Sigmoid colon (tissue), 7 donors: ENCODE measurements at regions of chr19 and their contacts with region 1.

Region 1: DNA sequence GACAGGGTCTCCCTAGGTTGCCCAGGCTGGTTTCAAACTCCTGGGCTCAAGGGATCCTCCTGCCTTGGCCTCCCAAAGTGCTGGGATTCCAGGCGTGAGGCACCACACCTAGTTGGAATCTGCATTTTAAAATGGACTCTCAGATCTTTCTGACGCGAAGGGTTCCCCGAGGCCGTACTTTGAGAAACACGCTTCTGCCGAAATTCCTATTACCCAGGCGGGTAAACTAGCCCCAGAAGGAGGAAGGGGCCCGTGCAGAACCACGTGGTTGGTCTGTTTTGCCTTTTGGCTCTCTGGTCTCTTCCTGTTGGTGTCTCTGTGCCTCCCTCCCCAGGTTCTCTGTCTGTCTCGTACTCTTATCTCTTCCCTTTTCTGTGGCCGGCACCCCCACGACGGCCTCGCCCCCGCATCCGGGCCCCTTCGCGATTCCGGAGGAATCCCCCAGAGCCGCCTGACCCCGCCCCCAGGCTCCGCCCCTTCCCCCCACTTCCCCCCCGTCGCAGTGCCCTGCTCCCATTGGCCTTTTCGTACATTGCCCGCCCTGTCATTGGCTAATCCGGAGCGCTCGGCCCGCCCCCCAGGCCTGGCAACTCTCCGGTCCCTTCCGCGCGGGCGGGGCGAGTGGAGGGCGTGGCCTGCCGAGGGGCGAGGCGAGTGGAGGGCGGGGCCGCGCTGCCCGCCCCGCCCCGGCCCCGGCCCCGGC is at the start of gene TNFAIP8L1:
- DNase-seq: peak; percentile 98
- H3K4me3 ChIP-seq: peak within 1 kb of the TSS; percentile 91 to 99 (median 94)
- H3K27ac ChIP-seq: peak within 1 kb of the TSS; percentile 69 to 97 (median 95)
- H3K4me1 ChIP-seq: peaks cover 0 to 56% (median 43%) of the 10 kb centered on the region in 4 donors
- H3K27me3 ChIP-seq: no peaks in the 10 kb centered on the region
- CTCF ChIP-seq: no peak
- EP300 ChIP-seq: no peak
- POLR2A ChIP-seq: no peak
- total RNA-seq, gene TNFAIP8L1: 18.9 to 25.2 (median 20.0) TPM

Region 2: GRCh38 chr19:4400135-4400936 is 238.6 kb before region 1 on chr19 and contains the start of gene SH3GL1:
- intact Hi-C with region 1: loop called (anchors 5 kb)
- DNase-seq: peak; percentile 98
- H3K4me3 ChIP-seq: peak within 1 kb of the TSS; percentile 91 to 98 (median 96)
- H3K27ac ChIP-seq: peak within 1 kb of the TSS; percentile 94 to 97 (median 96)
- H3K4me1 ChIP-seq: peaks cover 0 to 58% (median 55%) of the 10 kb centered on the region in 4 donors
- H3K27me3 ChIP-seq: no peaks in the 10 kb centered on the region
- CTCF ChIP-seq: peak; percentile 77 to 97 (median 88)
- EP300 ChIP-seq: peak in 1 of 4 donors; percentile 17
- POLR2A ChIP-seq: no peak
- total RNA-seq, gene SH3GL1: 28.5 to 33.9 (median 32.2) TPM

Region 3: DNA sequence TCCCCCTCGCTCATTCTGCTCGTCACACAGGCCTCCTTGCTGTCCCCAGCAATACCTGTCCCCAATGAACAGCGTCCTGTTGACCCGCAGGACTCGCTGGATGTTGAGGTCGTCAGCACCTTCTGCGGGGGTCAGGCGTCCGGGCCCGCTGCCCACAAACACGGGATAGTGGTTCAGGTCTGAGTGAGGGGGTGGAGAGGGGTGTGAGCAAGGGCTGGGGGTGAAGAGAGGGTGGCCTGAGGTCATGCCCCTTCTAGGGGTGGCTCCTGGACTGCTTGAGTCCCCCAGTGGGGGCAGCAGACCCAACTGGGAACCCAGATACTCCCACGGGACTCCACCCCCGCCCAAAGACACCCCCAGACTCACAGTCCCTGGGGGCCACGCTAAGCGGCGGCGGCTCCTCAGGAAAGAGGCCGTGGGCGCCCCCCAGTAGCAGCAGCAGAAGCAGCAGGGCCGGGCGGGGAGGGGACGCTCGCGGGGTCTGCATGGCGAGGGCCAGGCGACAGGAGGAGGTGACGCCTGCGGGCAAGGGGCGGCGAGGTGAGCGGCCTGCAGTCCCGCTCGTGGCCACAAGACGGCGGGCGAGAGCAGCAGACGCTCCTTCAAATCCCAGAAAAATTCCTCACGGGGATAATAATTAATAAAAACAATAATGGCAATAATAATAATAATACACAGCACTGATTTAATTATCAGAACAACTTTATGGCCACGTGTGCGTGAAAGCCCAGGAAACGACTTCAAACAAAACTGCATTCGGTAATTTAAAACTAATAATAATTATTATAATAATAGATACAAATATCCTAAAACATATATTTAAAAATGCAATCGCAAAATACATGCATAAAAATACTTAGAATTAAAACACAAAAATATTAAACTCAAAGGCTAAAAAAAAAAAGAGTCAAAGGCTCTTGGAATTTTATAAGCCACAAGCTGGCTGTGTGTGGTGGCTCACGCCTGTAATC is 80.7 kb before region 1 on chr19:
- intact Hi-C with region 1: loop called (anchors 5 kb)
- DNase-seq: no peak
- H3K4me3 ChIP-seq: peak overlapping the region; percentile 2 to 35 (median 18)
- H3K27ac ChIP-seq: peak overlapping the region in 2 of 4 donors; percentile 45 to 57
- H3K4me1 ChIP-seq: peaks cover 0 to 7% (median 5%) of the 10 kb centered on the region in 4 donors
- H3K27me3 ChIP-seq: no peaks in the 10 kb centered on the region
- CTCF ChIP-seq: peak; percentile 91 to 99 (median 96)
- EP300 ChIP-seq: no peak
- POLR2A ChIP-seq: no peak

Region 4: DNA sequence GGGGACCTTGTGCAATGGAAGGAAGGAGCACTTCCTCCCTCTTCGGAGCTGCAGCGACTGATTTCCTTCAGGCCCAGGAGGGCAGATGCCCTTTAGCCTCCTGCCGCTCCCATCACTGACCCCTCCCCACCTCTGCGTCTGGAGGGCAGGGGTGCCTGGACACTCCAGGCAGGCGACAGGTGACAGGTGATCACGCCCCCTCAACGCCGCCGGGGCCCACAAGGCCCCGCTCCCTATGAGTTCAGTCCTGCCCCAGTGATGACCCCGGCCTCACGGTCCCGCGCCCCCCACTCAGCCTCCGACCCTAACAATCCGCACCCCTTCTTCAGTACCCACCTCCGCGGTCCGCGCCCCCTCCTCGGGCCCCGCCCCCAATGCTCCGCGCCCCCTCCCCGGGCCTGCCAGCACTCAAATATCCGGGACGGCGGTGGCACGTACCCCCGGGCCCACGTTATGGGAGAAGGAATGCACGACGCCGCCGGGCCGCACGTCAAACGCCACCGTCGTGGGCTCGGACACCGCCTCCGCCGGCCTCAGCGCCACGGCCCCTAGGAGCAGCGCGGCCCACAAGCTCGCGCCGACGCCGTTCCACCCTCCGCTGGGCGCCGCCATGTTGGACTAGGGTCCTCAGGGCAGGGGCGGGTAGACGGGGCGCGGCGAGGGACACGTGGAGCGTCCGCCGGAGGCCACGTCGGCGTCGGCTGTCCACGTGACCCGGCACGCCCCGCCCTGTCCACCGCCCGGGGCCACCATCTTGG is 30.9 kb after region 1 on chr19 and contains the start of gene MYDGF:
- intact Hi-C with region 1: loop called (anchors 1 kb)
- DNase-seq: peak; percentile 96
- H3K4me3 ChIP-seq: peak within 1 kb of the TSS; percentile 89 to 99 (median 95)
- H3K27ac ChIP-seq: peak within 1 kb of the TSS; percentile 80 to 83 (median 82)
- H3K4me1 ChIP-seq: peaks cover 0 to 29% (median 22%) of the 10 kb centered on the region in 4 donors
- H3K27me3 ChIP-seq: no peaks in the 10 kb centered on the region
- CTCF ChIP-seq: no peak
- EP300 ChIP-seq: no peak
- POLR2A ChIP-seq: no peak
- total RNA-seq, gene MYDGF: 25.7 to 37.4 (median 34.0) TPM

Region 5: GRCh38 chr19:4690351-4690750 is 51.4 kb after region 1 on chr19:
- intact Hi-C with region 1: no loop called
- DNase-seq: no peak
- H3K4me3 ChIP-seq: no peak overlapping the region
- H3K27ac ChIP-seq: no peak overlapping the region
- H3K4me1 ChIP-seq: no peaks in the 10 kb centered on the region
- H3K27me3 ChIP-seq: no peaks in the 10 kb centered on the region
- CTCF ChIP-seq: no peak
- EP300 ChIP-seq: no peak
- POLR2A ChIP-seq: no peak